ENCODE measurements at regions of chr1 and their contacts with region 1.

Region 1: GRCh38 chr1:44652445-44653106 is 21.7 kb downstream of the TMEM53 start:
- DNase-seq: peak; percentile 38 to 78 (median 63)
- ATAC-seq: peak; percentile 96
- H3K4me3 ChIP-seq: no peak overlapping the region
- H3K4me3 Mint-ChIP-seq: no peak overlapping the region
- H3K27ac ChIP-seq: peak overlapping the region; percentile 45
- H3K27ac Mint-ChIP-seq: peak overlapping the region in 7 of 9 donors; percentile 8 to 75 (median 68)
- H3K4me1 ChIP-seq: no peaks in the 10 kb centered on the region
- H3K4me1 Mint-ChIP-seq: peaks cover 0 to 5% (median 0%) of the 10 kb centered on the region in 7 donors
- H3K27me3 ChIP-seq: no peaks in the 10 kb centered on the region
- H3K27me3 Mint-ChIP-seq: no peaks in the 10 kb centered on the region

Region 2: GRCh38 chr1:44213222-44214112 is 439.1 kb before region 1 on chr1 and contains the start of gene DMAP1:
- CTCF ChIA-PET with region 1: interaction called, 12 read pairs
- POLR2A ChIA-PET with region 1: no interaction called
- intact Hi-C with region 1: loop called (anchors 1 to 5 kb)
- DNase-seq: peak; percentile 75 to 89 (median 83)
- ATAC-seq: peak; percentile 93
- H3K4me3 ChIP-seq: peak within 1 kb of the TSS; percentile 93
- H3K4me3 Mint-ChIP-seq: peak within 1 kb of the TSS; percentile 85 to 97 (median 94)
- H3K27ac ChIP-seq: peak within 1 kb of the TSS; percentile 78
- H3K27ac Mint-ChIP-seq: peak within 1 kb of the TSS; percentile 86 to 97 (median 95)
- H3K4me1 ChIP-seq: peaks cover 9 to 17% of the 10 kb centered on the region in 2 donors
- H3K4me1 Mint-ChIP-seq: peaks cover 18 to 61% (median 49%) of the 10 kb centered on the region in 7 donors
- H3K27me3 ChIP-seq: no peaks in the 10 kb centered on the region
- H3K27me3 Mint-ChIP-seq: peaks cover 0 to 4% (median 0%) of the 10 kb centered on the region in 5 donors
- total RNA-seq, gene DMAP1: 46.3 to 96.2 (median 66.7) TPM

Region 3: DNA sequence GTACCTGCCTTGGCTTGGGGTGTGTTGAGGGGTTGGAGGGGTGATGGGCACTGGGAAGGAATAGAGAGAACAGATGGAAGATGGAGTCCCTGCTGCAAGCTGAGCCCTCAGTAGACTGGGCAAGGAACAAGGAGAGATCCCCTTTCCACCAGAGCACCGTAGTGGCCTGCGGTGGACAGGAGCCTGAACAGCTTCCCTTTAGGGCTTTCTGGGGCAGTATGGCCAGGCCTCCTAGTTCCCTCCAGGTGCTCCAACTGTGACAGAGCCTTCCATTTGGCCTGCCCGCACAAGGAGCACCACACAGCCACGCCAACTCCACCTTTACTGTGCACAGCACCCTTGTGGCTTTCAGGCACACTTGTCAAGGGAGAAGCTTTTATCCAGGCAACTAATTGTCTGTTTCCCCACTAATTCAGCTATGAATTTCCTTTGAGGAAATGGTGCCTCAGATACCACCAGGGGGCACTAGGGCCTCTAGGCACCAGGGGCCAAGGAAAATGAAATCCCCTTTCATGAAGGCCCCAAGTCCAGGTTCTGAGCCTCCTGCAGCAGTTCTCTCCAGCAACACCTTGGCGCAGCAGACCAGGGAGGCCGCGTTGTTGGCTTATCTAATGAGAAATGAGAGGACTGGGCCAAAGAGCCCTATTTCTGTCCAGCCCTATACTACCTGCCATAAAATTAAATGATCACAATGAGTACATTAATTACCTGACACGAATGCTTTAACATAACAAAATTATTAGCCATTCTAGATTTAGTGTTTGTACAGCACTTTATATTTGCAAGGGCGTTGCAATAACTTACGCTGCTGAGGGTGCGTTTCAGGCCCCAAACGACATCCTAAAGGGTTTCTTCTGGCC is 274.4 kb before region 1 on chr1:
- CTCF ChIA-PET with region 1: interaction called, 14 read pairs
- POLR2A ChIA-PET with region 1: no interaction called
- intact Hi-C with region 1: no loop called
- DNase-seq: peak in 8 of 9 donors; percentile 3 to 43 (median 29)
- ATAC-seq: peak; percentile 66
- H3K4me3 ChIP-seq: no peak overlapping the region
- H3K4me3 Mint-ChIP-seq: no peak overlapping the region
- H3K27ac ChIP-seq: no peak overlapping the region
- H3K27ac Mint-ChIP-seq: no peak overlapping the region
- H3K4me1 ChIP-seq: no peaks in the 10 kb centered on the region
- H3K4me1 Mint-ChIP-seq: peaks cover 0 to 2% (median 0%) of the 10 kb centered on the region in 7 donors
- H3K27me3 ChIP-seq: no peaks in the 10 kb centered on the region
- H3K27me3 Mint-ChIP-seq: peaks cover 0 to 8% (median 0%) of the 10 kb centered on the region in 5 donors

Region 4: DNA sequence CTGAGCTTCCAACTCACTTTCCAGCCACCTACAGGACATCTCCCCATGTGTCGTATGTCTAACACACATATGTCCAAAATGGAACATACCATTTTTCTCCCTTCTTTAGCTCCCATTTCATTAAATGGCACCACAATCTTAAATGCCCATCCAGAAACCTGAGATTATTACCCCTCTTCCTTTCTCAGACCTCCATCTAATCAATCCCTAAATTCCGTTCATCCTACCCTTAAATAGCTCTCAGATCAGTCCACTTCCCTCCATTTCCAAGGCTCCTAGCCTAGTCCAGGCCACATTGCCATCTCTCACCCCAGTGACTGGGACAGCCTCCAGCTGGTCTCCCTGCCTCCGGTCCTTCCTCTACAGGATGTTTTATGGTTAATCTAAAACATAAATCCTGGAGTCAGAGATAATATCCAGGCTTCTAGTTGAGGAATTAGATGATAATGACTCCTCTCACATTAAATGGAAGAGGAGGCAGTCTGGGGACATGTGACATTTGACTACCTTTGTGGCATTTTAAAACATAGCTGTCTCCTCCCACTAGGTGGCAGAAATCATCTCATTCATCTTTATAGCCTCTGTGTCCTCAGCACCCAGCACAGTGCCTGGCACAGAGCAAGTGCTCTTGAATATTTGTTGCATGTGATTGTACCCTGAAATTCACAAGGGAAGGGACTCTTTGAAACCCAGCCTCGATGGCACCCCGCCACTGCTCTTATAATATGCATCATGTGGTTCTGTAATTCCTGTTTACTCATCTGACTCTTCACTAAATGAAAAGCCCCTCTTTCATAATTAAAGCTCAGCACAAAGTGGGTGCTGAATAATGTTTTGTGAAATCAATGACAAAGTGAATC is 80.6 kb before region 1 on chr1:
- CTCF ChIA-PET with region 1: interaction called, 65 read pairs
- POLR2A ChIA-PET with region 1: no interaction called
- intact Hi-C with region 1: loop called in 1 of 2 experiments (anchors 1 kb)
- DNase-seq: peak in 6 of 9 donors; percentile 13 to 37 (median 24)
- ATAC-seq: peak; percentile 67
- H3K4me3 ChIP-seq: no peak overlapping the region
- H3K4me3 Mint-ChIP-seq: no peak overlapping the region
- H3K27ac ChIP-seq: no peak overlapping the region
- H3K27ac Mint-ChIP-seq: no peak overlapping the region
- H3K4me1 ChIP-seq: no peaks in the 10 kb centered on the region
- H3K4me1 Mint-ChIP-seq: no peaks in the 10 kb centered on the region
- H3K27me3 ChIP-seq: no peaks in the 10 kb centered on the region
- H3K27me3 Mint-ChIP-seq: peaks cover 0 to 20% (median 4%) of the 10 kb centered on the region in 5 donors

Region 5: GRCh38 chr1:44631647-44632539 is 20.7 kb before region 1 on chr1:
- CTCF ChIA-PET with region 1: interaction called, 19 read pairs
- POLR2A ChIA-PET with region 1: interaction called, 14 read pairs
- intact Hi-C with region 1: loop called in 1 of 2 experiments (anchors 1 kb)
- DNase-seq: peak; percentile 80 to 92 (median 87)
- ATAC-seq: peak; percentile 87
- H3K4me3 ChIP-seq: peak overlapping the region; percentile 70
- H3K4me3 Mint-ChIP-seq: peak overlapping the region; percentile 69 to 95 (median 90)
- H3K27ac ChIP-seq: peak overlapping the region; percentile 85
- H3K27ac Mint-ChIP-seq: peak overlapping the region; percentile 46 to 99 (median 97)
- H3K4me1 ChIP-seq: peaks cover 8 to 13% of the 10 kb centered on the region in 2 donors
- H3K4me1 Mint-ChIP-seq: peaks cover 26 to 50% (median 39%) of the 10 kb centered on the region in 7 donors
- H3K27me3 ChIP-seq: no peaks in the 10 kb centered on the region
- H3K27me3 Mint-ChIP-seq: no peaks in the 10 kb centered on the region

Region 6: GRCh38 chr1:44664730-44665370 is 12.3 kb after region 1 on chr1:
- CTCF ChIA-PET with region 1: interaction called, 10 read pairs
- POLR2A ChIA-PET with region 1: no interaction called
- intact Hi-C with region 1: no loop called
- DNase-seq: peak in 1 of 9 donors; percentile 44
- ATAC-seq: peak; percentile 57
- H3K4me3 ChIP-seq: no peak overlapping the region
- H3K4me3 Mint-ChIP-seq: peak overlapping the region in 9 of 10 donors; percentile 10 to 85 (median 47)
- H3K27ac ChIP-seq: no peak overlapping the region
- H3K27ac Mint-ChIP-seq: peak overlapping the region in 8 of 9 donors; percentile 3 to 81 (median 52)
- H3K4me1 ChIP-seq: peaks cover 0 to 8% of the 10 kb centered on the region in 2 donors
- H3K4me1 Mint-ChIP-seq: peaks cover 6 to 17% (median 13%) of the 10 kb centered on the region in 7 donors
- H3K27me3 ChIP-seq: no peaks in the 10 kb centered on the region
- H3K27me3 Mint-ChIP-seq: no peaks in the 10 kb centered on the region

Measured in naive thymus-derived CD4-positive, alpha-beta T cell (primary cell).